HCT116 (cell line): ENCODE measurements at regions of chr13 and their contacts with region 1.

Region 1: GRCh38 chr13:110705826-110706569 is at the start of gene CARS2:
- DNase-seq: peak; percentile 94
- ATAC-seq: peak; percentile 92
- H3K4me3 ChIP-seq: peak within 1 kb of the TSS; percentile 83 to 84
- H3K27ac ChIP-seq: peak within 1 kb of the TSS; percentile 78
- H3K4me1 ChIP-seq: peaks cover 17 to 37% of the 10 kb centered on the region in 2 experiments
- H3K27me3 ChIP-seq: no peaks in the 10 kb centered on the region
- CTCF ChIP-seq: no peak
- POLR2A ChIP-seq: no peak
- RAD21 ChIP-seq: no peak
- total RNA-seq, gene CARS2: 52.9 TPM

Region 2: DNA sequence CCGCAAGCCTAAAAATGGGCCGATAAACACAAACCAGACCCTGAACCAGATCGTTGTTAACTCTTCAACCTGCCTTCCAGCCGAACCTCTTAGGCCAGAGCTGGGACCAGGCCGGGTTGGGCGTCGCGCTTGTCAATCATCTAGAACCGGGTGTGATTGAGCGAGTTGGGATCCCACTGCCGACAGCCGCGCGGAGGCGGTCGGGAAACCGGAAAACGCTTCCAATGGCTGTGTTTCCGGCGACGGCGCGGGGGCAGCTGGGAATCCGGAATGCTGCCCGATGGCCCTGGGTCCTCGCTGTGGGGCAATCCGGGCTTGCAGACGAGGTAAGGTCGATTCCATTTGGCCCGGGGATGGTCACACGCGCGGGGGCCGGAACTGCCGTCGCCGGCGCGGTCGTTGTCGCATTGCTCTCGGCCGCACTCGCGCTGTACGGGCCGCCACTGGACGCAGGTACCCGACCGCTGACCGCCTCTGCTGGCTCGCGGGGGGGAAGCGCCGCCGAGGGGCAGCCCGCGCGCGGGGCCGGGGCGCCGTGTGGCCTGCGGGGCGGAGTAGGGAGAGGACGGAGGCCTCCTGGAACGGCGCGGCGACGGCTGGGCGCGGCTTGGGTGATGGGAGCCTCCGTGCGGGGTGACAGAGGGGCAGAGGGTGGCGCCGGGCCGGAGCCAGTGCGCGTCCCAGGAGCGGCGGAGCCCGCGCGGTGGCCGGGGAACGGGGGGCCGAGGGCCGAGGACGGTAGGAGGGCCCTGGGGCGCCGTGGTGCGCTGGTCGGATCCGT is 90.5 kb before region 1 on chr13 and contains the start of gene NAXD:
- CTCF ChIA-PET with region 1: no interaction called
- POLR2A ChIA-PET with region 1: no interaction called
- RAD21 ChIA-PET with region 1: no interaction called
- intact Hi-C with region 1: loop called (anchors 5 kb)
- DNase-seq: peak; percentile 90
- ATAC-seq: peak; percentile 95
- H3K4me3 ChIP-seq: peak within 1 kb of the TSS; percentile 72 to 88
- H3K27ac ChIP-seq: peak within 1 kb of the TSS; percentile 96
- H3K4me1 ChIP-seq: peaks cover 15 to 20% of the 10 kb centered on the region in 2 experiments
- H3K27me3 ChIP-seq: no peaks in the 10 kb centered on the region
- CTCF ChIP-seq: no peak
- POLR2A ChIP-seq: no peak
- RAD21 ChIP-seq: no peak
- total RNA-seq, gene NAXD: 32.1 TPM